Mammary epithelial cell (primary cell): ENCODE measurements at regions of chr6 and their contacts with region 1.

Region 1: DNA sequence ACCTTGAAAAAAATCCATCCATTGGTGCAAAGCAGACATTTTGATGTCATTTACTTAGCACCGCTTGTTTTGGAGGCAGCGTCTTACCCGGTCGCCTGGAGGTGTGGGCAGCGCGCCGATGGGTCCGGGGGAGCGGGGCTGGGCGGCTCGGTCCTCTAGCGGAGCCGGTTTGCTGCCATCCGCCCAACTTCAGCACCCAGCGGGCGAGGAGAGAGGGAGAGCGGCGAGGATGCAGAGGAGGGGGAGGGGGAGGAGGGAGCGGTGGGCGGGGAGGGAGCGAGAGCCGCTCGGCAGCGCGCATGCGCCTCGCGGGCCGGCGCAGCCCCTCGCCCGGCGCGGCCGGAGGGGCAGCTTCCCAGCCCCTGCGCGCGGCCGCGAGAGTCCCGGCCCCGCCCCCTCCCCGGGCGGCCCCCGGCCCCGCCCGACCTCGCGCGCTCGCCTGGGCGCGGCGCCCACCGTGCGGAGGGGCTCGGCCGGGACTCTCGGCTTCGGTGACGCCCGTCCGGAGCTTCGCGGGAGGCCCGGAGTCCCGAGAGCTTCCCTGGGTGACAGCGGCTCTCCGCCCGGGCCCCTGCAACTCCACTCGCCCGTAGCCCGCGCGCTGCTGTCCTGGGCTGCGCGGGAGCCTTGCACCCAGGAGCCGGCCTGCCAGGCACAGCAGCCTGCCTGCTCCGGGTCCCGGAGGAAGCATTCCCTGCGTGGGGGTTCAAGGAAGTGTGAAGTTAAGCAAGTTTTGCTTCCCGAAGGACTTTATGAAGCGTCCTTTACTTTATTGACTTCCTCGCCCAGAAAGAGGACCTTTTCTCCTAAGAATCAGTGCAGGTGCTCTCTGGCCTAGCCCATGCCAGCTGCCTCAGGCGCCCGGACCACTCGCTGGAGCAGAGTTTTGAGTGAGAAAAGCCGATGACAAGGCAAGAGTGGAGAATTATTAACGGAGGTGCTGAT is at the start of gene RGS17:
- DNase-seq: peak; percentile 55
- H3K4me3 ChIP-seq: peak within 1 kb of the TSS; percentile 65 to 92 (median 69)
- H3K27ac ChIP-seq: no peak within 1 kb of the TSS
- H3K4me1 ChIP-seq: peaks cover 5% of the 10 kb centered on the region
- H3K27me3 ChIP-seq: no peaks in the 10 kb centered on the region
- CTCF ChIP-seq: no peak
- total RNA-seq, gene RGS17: 0.50 to 4.1 TPM

Region 2: DNA sequence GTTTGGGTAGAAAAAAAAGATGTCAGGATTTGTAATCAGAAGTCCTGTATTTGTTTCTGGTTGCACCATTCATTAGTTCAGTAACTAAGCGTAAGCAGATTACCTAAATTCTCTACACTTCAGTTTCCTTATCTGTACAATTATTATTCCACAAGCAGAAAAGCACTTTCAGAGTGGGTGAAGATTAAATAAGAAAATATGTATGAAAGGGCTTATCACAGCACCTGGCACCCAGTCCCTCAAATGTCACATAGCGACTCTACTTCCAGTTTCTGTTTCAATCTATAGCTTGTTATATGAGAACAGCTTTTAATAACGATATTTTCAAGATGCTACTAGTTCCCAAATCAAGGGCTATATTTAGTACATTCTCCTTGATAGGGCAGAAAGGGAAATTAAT is 31.7 kb before region 1 on chr6:
- CTCF ChIA-PET with region 1: no interaction called
- dilution Hi-C with region 1: no loop called
- in situ Hi-C with region 1: no loop called
- intact Hi-C with region 1: no loop called
- DNase-seq: no peak
- H3K4me3 ChIP-seq: no peak overlapping the region
- H3K27ac ChIP-seq: no peak overlapping the region
- H3K4me1 ChIP-seq: peaks cover 3% of the 10 kb centered on the region
- H3K27me3 ChIP-seq: no peaks in the 10 kb centered on the region
- CTCF ChIP-seq: no peak

Region 3: DNA sequence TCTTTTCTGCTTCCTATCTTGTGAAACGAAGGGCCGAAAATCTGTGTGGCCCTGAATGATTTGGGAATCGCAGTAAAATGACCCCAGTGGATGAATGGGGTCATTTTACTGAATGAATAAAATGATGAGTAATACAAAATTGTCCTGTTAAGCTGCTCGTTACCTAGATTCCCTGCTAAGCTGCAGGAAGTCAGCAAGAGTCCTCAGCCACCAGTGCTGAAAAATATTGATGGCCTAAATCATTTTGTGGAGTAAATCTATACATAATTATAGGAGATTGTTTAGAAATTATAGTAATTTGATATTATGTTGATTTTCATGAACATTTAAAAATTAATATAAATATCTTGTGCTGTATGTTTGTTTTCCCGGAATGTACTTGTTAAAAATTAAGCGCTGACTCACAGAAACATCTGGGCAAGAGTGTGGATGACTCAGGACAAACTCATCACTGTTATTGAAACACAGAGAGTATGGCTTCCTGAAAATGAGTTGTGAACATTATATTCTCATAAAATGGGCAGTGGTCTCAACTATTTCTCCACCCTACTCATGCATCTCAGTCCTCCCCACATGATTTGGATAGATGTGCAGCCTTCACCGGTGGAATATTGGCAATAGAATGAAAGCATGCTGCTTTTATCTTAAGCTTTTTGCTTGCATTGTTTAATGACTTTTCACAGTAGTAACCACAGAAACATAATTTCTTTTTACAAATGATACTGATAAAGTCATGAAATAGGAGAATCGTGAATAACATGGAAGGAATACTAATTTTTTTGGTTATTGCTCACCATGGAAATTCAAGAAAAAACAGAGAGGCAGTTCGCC is 36.0 kb after region 1 on chr6:
- CTCF ChIA-PET with region 1: interaction called, 5 read pairs
- dilution Hi-C with region 1: no loop called
- in situ Hi-C with region 1: no loop called
- intact Hi-C with region 1: loop called (anchors 5 kb)
- DNase-seq: peak; percentile 87
- H3K4me3 ChIP-seq: peak overlapping the region in 1 of 3 experiments; percentile 19
- H3K27ac ChIP-seq: peak overlapping the region; percentile 90
- H3K4me1 ChIP-seq: peaks cover 43% of the 10 kb centered on the region
- H3K27me3 ChIP-seq: no peaks in the 10 kb centered on the region
- CTCF ChIP-seq: no peak

Region 4: DNA sequence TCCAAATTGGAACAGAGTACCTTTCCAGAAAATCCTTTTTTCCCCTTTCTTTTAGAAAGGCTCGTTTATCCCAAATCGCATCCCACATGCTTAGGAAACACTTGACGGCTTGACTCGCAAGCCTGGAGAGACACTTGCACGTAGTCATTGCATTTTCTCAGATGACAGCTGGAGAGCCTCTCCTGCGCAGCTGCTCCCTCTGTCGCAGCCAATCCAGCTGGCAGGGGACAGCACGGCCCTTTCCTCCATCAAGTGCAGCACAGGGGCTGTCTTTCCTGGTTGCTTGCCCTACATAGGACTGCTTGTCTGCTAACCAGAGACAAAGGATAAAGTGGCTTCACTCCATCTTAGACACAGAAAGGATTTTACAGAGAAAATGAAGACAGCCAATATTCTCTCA is 77.4 kb after region 1 on chr6:
- CTCF ChIA-PET with region 1: no interaction called
- dilution Hi-C with region 1: loop called (anchors 5 kb)
- in situ Hi-C with region 1: no loop called
- intact Hi-C with region 1: no loop called
- DNase-seq: no peak
- H3K4me3 ChIP-seq: no peak overlapping the region
- H3K27ac ChIP-seq: no peak overlapping the region
- H3K4me1 ChIP-seq: peaks cover 3% of the 10 kb centered on the region
- H3K27me3 ChIP-seq: no peaks in the 10 kb centered on the region
- CTCF ChIP-seq: no peak

Region 5: GRCh38 chr6:153357391-153357790 is 226.1 kb after region 1 on chr6:
- CTCF ChIA-PET with region 1: no interaction called
- dilution Hi-C with region 1: no loop called
- in situ Hi-C with region 1: no loop called
- intact Hi-C with region 1: no loop called
- DNase-seq: no peak
- H3K4me3 ChIP-seq: no peak overlapping the region
- H3K27ac ChIP-seq: no peak overlapping the region
- H3K4me1 ChIP-seq: no peaks in the 10 kb centered on the region
- H3K27me3 ChIP-seq: no peaks in the 10 kb centered on the region
- CTCF ChIP-seq: no peak